MCF 10A (cell line): ENCODE measurements at regions of chr19 and their contacts with region 1.

Region 1: GRCh38 chr19:36687214-36688056 is at the start of gene ZNF567:
- DNase-seq: peak; percentile 99
- H3K4me3 Mint-ChIP-seq: peak within 1 kb of the TSS; percentile 100
- H3K27ac Mint-ChIP-seq: peak within 1 kb of the TSS; percentile 98
- H3K4me1 Mint-ChIP-seq: peaks cover 13% of the 10 kb centered on the region
- H3K27me3 Mint-ChIP-seq: no peaks in the 10 kb centered on the region
- CTCF ChIP-seq: no peak
- total RNA-seq, gene ZNF567: 6.1 and 6.6 TPM in 2 replicates

Region 2: GRCh38 chr19:36508325-36508724 is 179.1 kb before region 1 on chr19:
- CTCF ChIA-PET with region 1: no interaction called
- POLR2A ChIA-PET with region 1: no interaction called
- intact Hi-C with region 1: no loop called
- DNase-seq: no peak
- H3K4me3 Mint-ChIP-seq: no peak overlapping the region
- H3K27ac Mint-ChIP-seq: no peak overlapping the region
- H3K4me1 Mint-ChIP-seq: no peaks in the 10 kb centered on the region
- H3K27me3 Mint-ChIP-seq: no peaks in the 10 kb centered on the region
- CTCF ChIP-seq: no peak

Region 3: DNA sequence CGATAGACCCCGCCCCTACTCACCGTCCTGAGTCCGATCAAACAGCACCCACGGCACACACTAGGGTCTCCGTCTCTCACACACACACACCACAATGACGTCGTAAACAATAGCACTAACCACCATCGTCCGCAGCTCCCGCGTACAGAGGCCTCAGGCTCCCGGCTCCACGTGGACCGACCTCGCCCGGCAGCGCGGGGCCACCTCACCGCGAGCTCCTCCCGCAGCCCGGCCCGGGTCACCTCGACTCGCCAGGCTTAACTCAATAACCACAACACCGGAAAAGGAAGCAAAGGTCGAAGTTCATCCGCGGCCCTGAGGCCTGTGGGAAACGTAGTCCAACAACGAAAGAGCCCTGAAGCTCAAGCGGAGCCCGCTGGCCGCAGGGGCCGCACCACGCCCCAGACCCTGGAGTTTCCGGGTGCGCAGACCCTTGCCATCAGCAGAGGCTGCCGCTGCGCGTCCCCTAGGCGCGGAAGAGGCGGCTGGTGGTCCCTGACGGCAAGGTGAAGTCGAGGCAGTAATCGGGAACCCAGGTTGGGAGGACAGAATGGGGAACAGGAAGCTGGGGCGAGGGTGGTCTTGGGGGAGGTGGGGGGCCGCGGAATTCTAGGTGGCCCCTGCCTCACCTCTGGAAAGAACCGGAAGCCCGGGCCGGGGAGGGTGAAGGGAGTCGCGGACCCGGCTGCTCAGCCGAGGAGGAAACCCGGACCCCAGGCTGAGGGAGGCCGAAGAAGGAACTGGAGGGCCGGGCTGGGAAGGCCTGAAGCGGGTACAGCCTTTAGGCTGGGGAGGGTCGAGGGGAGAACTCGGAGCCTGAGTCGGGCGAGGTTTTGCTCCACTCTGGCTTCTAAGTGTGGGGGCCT is 114.2 kb before region 1 on chr19 and contains the start of gene ZNF529:
- CTCF ChIA-PET with region 1: interaction called, 3 read pairs
- POLR2A ChIA-PET with region 1: interaction called, 20 read pairs
- intact Hi-C with region 1: no loop called
- DNase-seq: peak; percentile 93
- H3K4me3 Mint-ChIP-seq: peak within 1 kb of the TSS; percentile 93
- H3K27ac Mint-ChIP-seq: peak within 1 kb of the TSS; percentile 99
- H3K4me1 Mint-ChIP-seq: peaks cover 26% of the 10 kb centered on the region
- H3K27me3 Mint-ChIP-seq: no peaks in the 10 kb centered on the region
- CTCF ChIP-seq: no peak
- total RNA-seq, gene ZNF529: 11.4 and 12.8 TPM in 2 replicates

Region 4: GRCh38 chr19:36665832-36666231 is 21.6 kb before region 1 on chr19:
- CTCF ChIA-PET with region 1: interaction called, 3 read pairs
- POLR2A ChIA-PET with region 1: interaction called, 41 read pairs
- intact Hi-C with region 1: loop called (anchors 1 kb)
- DNase-seq: no peak
- H3K4me3 Mint-ChIP-seq: peak overlapping the region; percentile 94
- H3K27ac Mint-ChIP-seq: peak overlapping the region; percentile 93
- H3K4me1 Mint-ChIP-seq: peaks cover 6% of the 10 kb centered on the region
- H3K27me3 Mint-ChIP-seq: no peaks in the 10 kb centered on the region
- CTCF ChIP-seq: no peak

Region 5: DNA sequence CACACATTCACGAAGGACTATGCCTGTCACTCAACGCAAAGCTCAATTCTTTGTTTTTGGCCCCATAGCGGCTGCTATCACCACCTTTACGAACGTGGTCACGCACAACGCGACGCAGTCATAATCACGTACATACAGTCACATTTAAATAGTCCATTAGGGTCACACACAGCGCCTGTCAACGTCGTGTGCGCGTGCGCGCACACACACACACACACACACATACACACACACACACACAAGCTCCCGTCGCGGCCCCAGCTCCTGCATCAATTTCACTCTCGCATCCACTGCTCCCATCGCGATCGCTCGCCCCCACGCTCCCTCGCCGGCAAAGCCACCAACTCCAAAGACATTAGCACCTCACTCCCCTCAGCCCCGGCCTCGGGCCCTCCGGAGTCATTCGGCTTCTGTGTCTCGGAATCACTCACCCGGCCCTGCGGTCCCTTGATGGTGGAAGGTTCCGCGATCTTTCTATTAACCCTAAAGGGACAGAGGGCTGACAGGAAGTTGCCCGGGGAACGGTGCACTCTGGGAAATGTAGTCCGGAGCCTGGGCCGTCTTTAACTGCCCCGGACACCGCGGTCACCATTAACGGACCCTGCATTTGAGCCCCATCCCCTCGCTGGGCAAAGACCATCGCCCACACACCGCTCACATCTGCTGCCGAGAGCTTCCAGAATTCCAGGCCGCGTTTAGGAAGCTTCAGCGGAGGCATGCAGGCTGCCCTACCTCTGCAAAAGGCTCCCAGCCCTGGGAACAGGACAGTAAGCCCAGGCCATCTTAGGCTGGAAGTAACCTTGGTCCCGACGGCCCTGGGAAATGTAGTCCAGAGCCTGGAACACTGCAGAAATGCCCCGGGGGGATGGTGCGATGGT is 150.7 kb after region 1 on chr19 and contains the start of gene ZNF790:
- CTCF ChIA-PET with region 1: interaction called, 3 read pairs
- POLR2A ChIA-PET with region 1: interaction called, 13 read pairs
- intact Hi-C with region 1: no loop called
- DNase-seq: peak; percentile 79
- H3K4me3 Mint-ChIP-seq: no peak within 1 kb of the TSS
- H3K27ac Mint-ChIP-seq: no peak within 1 kb of the TSS
- H3K4me1 Mint-ChIP-seq: no peaks in the 10 kb centered on the region
- H3K27me3 Mint-ChIP-seq: no peaks in the 10 kb centered on the region
- CTCF ChIP-seq: no peak
- total RNA-seq, gene ZNF790: 8.2 and 8.7 TPM in 2 replicates